CD8-positive, alpha-beta memory T cell (primary cell): ENCODE measurements at regions of chr1 and their contacts with region 1.

Region 1: DNA sequence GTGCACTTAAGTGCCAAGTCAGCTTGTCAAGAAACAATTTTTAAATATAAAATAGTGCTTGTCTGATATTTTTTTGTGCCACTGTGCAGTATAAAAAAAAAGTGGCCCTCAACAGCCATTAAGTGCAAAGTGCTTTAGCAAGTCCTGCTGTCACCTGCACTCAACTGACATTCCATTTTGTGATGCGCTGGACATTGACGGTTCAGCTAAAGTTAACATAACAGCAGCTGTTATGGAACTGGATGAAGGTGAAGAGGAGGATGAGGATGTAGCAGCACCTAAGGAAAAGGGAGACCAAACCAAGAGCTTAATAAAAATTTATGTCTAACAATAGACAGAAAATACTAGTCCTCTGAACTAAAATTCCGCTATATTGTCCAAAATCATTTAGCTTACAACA is 7.3 kb upstream of the RBM34 start:
- DNase-seq: no peak
- H3K4me3 ChIP-seq: no peak overlapping the region
- H3K4me3 Mint-ChIP-seq: no peak overlapping the region
- H3K27ac ChIP-seq: no peak overlapping the region
- H3K27ac Mint-ChIP-seq: peak overlapping the region in 2 of 8 donors; percentile 54 to 87
- H3K4me1 ChIP-seq: no peaks in the 10 kb centered on the region
- H3K4me1 Mint-ChIP-seq: no peaks in the 10 kb centered on the region
- H3K27me3 ChIP-seq: no peaks in the 10 kb centered on the region
- H3K27me3 Mint-ChIP-seq: no peaks in the 10 kb centered on the region

Region 2: GRCh38 chr1:234433563-234434285 is 734.7 kb before region 1 on chr1:
- CTCF ChIA-PET with region 1: no interaction called
- POLR2A ChIA-PET with region 1: interaction called, 11 read pairs
- DNase-seq: no peak
- H3K4me3 ChIP-seq: no peak overlapping the region
- H3K4me3 Mint-ChIP-seq: no peak overlapping the region
- H3K27ac ChIP-seq: no peak overlapping the region
- H3K27ac Mint-ChIP-seq: peak overlapping the region in 1 of 8 donors; percentile 43
- H3K4me1 ChIP-seq: no peaks in the 10 kb centered on the region
- H3K4me1 Mint-ChIP-seq: peaks cover 2 to 5% (median 4%) of the 10 kb centered on the region in 3 donors
- H3K27me3 ChIP-seq: no peaks in the 10 kb centered on the region
- H3K27me3 Mint-ChIP-seq: no peaks in the 10 kb centered on the region

Region 3: GRCh38 chr1:235147269-235147668 is 21.1 kb before region 1 on chr1:
- CTCF ChIA-PET with region 1: no interaction called
- POLR2A ChIA-PET with region 1: no interaction called
- DNase-seq: no peak
- H3K4me3 ChIP-seq: no peak overlapping the region
- H3K4me3 Mint-ChIP-seq: no peak overlapping the region
- H3K27ac ChIP-seq: no peak overlapping the region
- H3K27ac Mint-ChIP-seq: peak overlapping the region in 2 of 8 donors; percentile 34 to 54
- H3K4me1 ChIP-seq: no peaks in the 10 kb centered on the region
- H3K4me1 Mint-ChIP-seq: peaks cover 21 to 53% (median 27%) of the 10 kb centered on the region in 3 donors
- H3K27me3 ChIP-seq: no peaks in the 10 kb centered on the region
- H3K27me3 Mint-ChIP-seq: no peaks in the 10 kb centered on the region

Region 4: GRCh38 chr1:235181561-235182245 is 13.3 kb after region 1 on chr1:
- CTCF ChIA-PET with region 1: no interaction called
- POLR2A ChIA-PET with region 1: no interaction called
- DNase-seq: no peak
- H3K4me3 ChIP-seq: no peak overlapping the region
- H3K4me3 Mint-ChIP-seq: peak overlapping the region in 2 of 7 donors; percentile 11 to 13
- H3K27ac ChIP-seq: no peak overlapping the region
- H3K27ac Mint-ChIP-seq: peak overlapping the region; percentile 1 to 89 (median 33)
- H3K4me1 ChIP-seq: no peaks in the 10 kb centered on the region
- H3K4me1 Mint-ChIP-seq: peaks cover 25 to 37% (median 27%) of the 10 kb centered on the region in 3 donors
- H3K27me3 ChIP-seq: no peaks in the 10 kb centered on the region
- H3K27me3 Mint-ChIP-seq: peaks cover 0 to 1% of the 10 kb centered on the region in 2 donors